Caco-2 (cell line): ENCODE measurements at regions of chr2 and their contacts with region 1.

Region 1: GRCh38 chr2:186946896-186947467 is 98.0 kb upstream of the ZSWIM2 start:
- DNase-seq: no peak
- H3K4me3 ChIP-seq: no peak overlapping the region
- H3K4me3 Mint-ChIP-seq: no peak overlapping the region
- H3K27ac Mint-ChIP-seq: no peak overlapping the region
- H3K4me1 ChIP-seq: no peaks in the 10 kb centered on the region
- H3K4me1 Mint-ChIP-seq: no peaks in the 10 kb centered on the region
- H3K27me3 ChIP-seq: no peaks in the 10 kb centered on the region
- H3K27me3 Mint-ChIP-seq: no peaks in the 10 kb centered on the region
- CTCF ChIP-seq: peak in 1 of 2 experiments; percentile 6

Region 2: DNA sequence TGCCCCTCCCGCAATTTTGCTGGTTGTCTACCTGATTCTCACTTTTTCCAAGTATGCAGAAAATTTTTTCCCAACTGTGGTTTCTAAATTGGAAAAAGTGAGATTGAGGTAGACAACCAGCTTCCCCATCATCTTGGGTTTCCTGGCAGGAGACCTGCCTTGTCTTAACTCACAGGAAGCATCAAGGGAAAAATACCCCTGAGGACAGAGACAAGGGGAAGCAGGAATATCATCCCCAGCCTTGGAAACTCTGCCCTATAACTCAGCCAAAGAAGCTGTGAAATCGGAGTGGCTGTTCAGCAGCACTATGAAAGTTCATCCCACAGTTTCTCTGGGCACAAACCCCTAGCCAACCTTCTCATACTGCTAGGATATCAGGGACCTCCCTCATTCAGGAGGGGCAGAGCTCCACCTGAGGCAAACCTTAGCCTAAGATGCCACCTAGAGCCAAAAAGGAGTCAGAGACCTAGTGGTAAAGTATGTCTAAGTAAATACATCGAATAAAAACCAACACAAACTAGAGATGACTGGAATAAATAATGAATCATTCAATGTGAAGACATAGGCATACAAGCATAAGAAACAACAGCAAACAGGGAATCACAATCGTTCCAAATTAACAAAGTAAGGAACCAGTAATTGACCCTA is 166.2 kb before region 1 on chr2:
- CTCF ChIA-PET with region 1: no interaction called
- POLR2A ChIA-PET with region 1: no interaction called
- intact Hi-C with region 1: no loop called
- DNase-seq: peak; percentile 61 to 63
- H3K4me3 ChIP-seq: no peak overlapping the region
- H3K4me3 Mint-ChIP-seq: no peak overlapping the region
- H3K27ac Mint-ChIP-seq: no peak overlapping the region
- H3K4me1 ChIP-seq: no peaks in the 10 kb centered on the region
- H3K4me1 Mint-ChIP-seq: no peaks in the 10 kb centered on the region
- H3K27me3 ChIP-seq: no peaks in the 10 kb centered on the region
- H3K27me3 Mint-ChIP-seq: no peaks in the 10 kb centered on the region
- CTCF ChIP-seq: peak; percentile 42 to 43

Region 3: DNA sequence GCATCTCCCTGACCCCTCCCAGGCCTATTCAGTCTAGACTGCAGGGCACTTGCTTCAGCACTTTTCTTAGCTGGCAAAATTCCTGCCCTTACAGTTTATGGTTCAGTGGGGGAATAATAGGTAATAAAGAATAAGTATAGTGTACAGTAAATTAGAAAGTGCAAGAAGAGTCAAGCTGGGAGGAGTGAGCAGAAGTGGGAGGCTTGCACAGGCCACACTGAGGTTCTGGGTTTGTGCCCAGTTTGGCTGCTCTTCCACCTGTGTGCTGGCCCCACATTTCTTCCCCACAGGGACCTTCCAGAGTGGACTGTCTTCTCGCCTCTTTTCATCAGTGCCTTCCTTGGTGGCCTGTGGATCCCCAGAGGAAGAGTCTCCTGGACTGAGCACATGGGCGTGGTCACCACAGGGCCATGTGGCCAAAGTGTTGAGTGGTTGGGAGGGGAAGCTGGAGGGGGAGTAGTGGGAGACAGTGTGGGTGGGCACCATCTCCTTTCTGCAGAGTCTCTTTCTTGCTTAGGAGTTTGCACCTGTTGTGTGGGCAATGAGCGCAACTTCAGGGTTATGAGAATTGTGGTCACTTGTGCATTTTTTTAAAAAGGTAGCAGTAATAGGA is 30.6 kb after region 1 on chr2:
- CTCF ChIA-PET with region 1: interaction called, 3 read pairs
- POLR2A ChIA-PET with region 1: no interaction called
- intact Hi-C with region 1: loop called (anchors 2 kb)
- DNase-seq: no peak
- H3K4me3 ChIP-seq: no peak overlapping the region
- H3K4me3 Mint-ChIP-seq: no peak overlapping the region
- H3K27ac Mint-ChIP-seq: no peak overlapping the region
- H3K4me1 ChIP-seq: peaks cover 7% of the 10 kb centered on the region; the same call in 1 of the 2 replicates
- H3K4me1 Mint-ChIP-seq: peaks cover 8% of the 10 kb centered on the region
- H3K27me3 ChIP-seq: no peaks in the 10 kb centered on the region; the same call in 1 of the 2 replicates
- H3K27me3 Mint-ChIP-seq: no peaks in the 10 kb centered on the region
- CTCF ChIP-seq: no peak